IMR-90 (cell line): ENCODE measurements at regions of chr7 and their contacts with region 1.

Region 1: DNA sequence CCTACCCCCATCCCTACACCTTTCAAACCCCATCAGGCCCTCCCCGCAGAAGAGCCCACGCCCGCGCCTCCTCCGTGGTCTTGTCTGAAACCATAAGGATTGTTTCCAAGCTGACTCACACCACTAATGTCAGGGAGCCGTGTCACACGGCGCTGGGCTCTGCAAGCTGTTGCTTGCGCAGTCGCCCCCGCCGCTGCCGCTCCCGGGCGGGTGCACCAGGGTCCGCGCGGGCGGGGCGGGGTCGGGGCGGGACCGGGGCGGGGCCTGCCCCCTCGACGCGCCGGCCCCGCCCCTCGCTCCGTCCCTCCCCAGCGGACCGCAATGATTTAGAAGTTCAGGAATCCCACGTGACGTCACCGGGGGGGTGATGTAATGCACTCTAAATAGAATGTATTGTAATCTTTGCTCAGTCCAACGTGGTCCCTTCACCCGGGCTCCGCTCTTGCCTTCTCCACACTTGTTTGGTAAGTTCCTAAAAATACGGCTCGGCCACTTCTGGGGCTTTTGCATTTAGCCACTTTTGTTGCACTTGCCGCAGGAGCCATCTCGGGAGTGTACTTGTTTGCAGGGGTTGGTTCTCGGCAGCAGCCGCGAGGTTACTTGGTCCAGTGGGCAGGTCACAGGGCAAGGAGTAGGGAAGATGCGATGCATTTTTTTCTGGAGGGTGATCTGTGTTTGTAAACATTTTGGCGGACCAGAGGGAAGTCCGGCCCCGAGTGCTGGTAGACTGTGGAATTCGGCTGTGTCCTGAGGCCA is 3.2 kb upstream of the CREB5 start:
- DNase-seq: peak; percentile 98
- ATAC-seq: peak; percentile 90
- H3K4me3 ChIP-seq: peak overlapping the region; percentile 66
- H3K27ac ChIP-seq: peak overlapping the region; percentile 78
- H3K4me1 ChIP-seq: peaks cover 7% of the 10 kb centered on the region; the same call in 1 of the 2 replicates
- H3K27me3 ChIP-seq: no peaks in the 10 kb centered on the region
- CTCF ChIP-seq: no peak
- POLR2A ChIP-seq: peak; percentile 95
- RAD21 ChIP-seq: no peak

Region 2: DNA sequence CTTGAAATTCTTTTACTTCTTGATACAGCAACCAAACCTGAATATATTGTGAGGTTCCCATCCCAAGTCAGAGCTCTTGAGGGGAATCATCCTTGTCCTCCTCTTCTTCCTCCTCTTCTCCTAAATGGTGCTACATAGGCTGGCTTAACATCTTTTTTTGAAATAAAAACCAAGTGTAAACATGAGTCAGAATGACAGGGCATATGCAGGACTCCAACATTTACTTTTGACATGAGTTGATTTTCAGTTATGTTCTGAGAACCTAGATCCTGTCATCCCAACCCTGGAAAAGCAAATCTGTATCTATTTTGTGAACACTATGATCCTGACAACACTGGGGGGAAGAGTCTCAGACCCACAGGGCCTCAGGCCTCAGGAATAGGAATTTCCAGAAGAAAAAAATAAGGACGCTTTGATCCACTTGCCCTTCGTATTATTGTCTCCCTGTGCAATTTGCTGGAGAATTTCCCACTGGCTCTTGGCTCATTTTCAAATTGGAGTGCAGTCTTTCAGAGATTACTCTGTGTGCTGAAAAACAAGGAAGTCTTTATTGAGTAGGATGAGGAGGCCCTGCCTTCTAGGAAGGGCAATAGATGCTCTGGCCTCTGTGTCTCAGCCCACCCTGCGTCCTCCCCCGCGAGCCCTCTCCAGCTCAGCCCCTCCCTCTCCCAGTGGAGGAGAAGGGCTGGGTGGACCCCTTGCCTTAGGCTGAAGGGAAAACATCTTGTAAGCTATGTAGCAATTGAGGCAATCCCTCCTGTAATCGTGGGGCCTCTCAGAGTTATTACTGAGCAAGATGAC is 124.8 kb after region 1 on chr7:
- CTCF ChIA-PET with region 1: no interaction called
- POLR2A ChIA-PET with region 1: no interaction called
- dilution Hi-C with region 1: no loop called
- in situ Hi-C with region 1: no loop called
- intact Hi-C with region 1: loop called (anchors 5 kb)
- DNase-seq: peak; percentile 78
- ATAC-seq: peak; percentile 56
- H3K4me3 ChIP-seq: no peak overlapping the region
- H3K27ac ChIP-seq: 0 out of 2 replicates have a peak overlapping the region, but pooled peaks have one; percentile 21
- H3K4me1 ChIP-seq: peaks cover 9% of the 10 kb centered on the region
- H3K27me3 ChIP-seq: no peaks in the 10 kb centered on the region
- CTCF ChIP-seq: no peak
- POLR2A ChIP-seq: no peak
- RAD21 ChIP-seq: no peak

Region 3: DNA sequence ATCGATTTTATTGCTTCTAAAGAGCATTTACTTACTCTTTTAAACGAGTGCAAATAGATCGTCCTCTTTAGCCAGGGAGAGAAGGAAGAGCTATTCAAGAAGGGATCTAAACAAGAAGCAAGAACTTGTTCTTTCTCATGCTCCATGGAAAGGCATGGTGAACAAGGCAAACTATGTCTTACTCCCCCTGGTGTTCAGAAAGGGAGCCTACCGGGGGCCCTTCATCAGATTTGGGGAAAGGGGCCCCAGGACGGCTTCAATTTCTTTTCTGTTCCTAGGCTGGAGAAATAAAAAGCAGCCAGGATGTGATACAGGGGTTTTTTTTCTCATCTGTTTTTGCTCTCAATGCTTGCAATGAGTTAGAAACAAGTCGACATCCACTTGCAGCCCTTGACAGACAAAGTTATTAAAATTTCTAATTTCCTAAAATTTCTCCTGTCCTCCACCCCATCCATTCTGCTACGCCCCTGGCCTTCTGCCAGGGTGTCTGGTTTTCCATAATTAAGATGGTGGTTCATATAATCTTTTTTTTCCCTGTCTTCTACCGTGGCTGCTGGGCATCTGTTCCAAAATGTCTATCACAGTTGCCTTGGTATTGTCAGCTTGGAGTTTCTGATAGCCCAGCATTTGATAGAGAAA is 217.6 kb after region 1 on chr7:
- CTCF ChIA-PET with region 1: no interaction called
- POLR2A ChIA-PET with region 1: no interaction called
- dilution Hi-C with region 1: no loop called
- in situ Hi-C with region 1: no loop called
- intact Hi-C with region 1: loop called (anchors 5 kb)
- DNase-seq: peak; percentile 36
- ATAC-seq: peak; percentile 38; the same call in 1 of the 2 replicates
- H3K4me3 ChIP-seq: no peak overlapping the region
- H3K27ac ChIP-seq: no peak overlapping the region
- H3K4me1 ChIP-seq: peaks cover 6% of the 10 kb centered on the region
- H3K27me3 ChIP-seq: no peaks in the 10 kb centered on the region
- CTCF ChIP-seq: peak; percentile 52
- POLR2A ChIP-seq: no peak
- RAD21 ChIP-seq: peak; percentile 51

Region 4: DNA sequence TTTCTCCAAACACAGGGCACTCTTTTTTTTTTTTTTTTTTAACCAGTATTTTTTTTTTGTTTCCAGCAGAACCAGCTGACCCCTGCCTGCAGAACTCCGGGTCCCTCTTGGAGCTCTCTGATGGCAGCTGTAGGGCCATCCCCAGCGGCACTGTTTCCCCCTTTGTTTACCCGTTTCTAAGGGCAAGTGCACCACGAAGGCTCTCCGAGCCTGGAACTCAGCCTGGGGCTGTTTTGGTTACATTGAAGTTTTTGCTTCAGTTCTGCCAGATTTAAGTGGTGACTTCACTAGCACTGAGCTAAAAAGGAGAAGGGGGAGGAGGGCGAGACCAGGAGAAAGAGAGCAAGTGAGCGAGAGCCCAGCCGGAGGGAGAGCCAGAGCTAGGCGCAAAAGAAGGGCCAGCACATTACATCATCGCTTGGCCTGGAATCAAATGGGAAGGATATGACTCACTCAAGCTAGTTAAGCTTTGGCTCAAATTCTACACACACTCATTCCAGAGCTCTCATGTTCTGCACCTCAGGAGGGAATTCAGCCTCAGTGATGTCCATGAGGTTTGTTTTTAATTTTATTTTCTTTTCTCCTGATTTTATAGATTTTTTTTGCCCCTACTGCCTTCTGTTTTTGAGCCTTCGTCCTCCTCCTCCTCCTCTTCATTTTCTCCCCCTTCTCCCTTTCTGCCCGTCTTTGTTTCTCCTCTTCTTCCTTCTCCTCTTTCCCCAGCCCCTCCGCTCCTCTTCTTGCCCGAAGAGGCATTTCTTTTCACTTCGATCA is 276.7 kb after region 1 on chr7:
- CTCF ChIA-PET with region 1: no interaction called
- POLR2A ChIA-PET with region 1: no interaction called
- dilution Hi-C with region 1: no loop called
- in situ Hi-C with region 1: no loop called
- intact Hi-C with region 1: loop called (anchors 1 kb)
- DNase-seq: peak; percentile 99
- ATAC-seq: peak; percentile 96
- H3K4me3 ChIP-seq: peak overlapping the region; percentile 45
- H3K27ac ChIP-seq: peak overlapping the region; percentile 71
- H3K4me1 ChIP-seq: peaks cover 4% of the 10 kb centered on the region
- H3K27me3 ChIP-seq: no peaks in the 10 kb centered on the region
- CTCF ChIP-seq: no peak
- POLR2A ChIP-seq: peak; percentile 93
- RAD21 ChIP-seq: 0 out of 2 replicates have a peak, but pooled peaks have one; percentile 4

Region 5: GRCh38 chr7:28865601-28866144 is 456.5 kb after region 1 on chr7:
- CTCF ChIA-PET with region 1: no interaction called
- POLR2A ChIA-PET with region 1: no interaction called
- dilution Hi-C with region 1: no loop called
- in situ Hi-C with region 1: no loop called
- intact Hi-C with region 1: no loop called
- DNase-seq: peak; percentile 38
- ATAC-seq: peak; percentile 84
- H3K4me3 ChIP-seq: no peak overlapping the region
- H3K27ac ChIP-seq: peak overlapping the region; percentile 23; the same call in 1 of the 2 replicates
- H3K4me1 ChIP-seq: peaks cover 2% of the 10 kb centered on the region; the same call in 1 of the 2 replicates
- H3K27me3 ChIP-seq: peaks cover 2% of the 10 kb centered on the region; the same call in 1 of the 2 replicates
- CTCF ChIP-seq: no peak
- POLR2A ChIP-seq: no peak
- RAD21 ChIP-seq: no peak